ENCODE measurements at regions of chr10 and their contacts with region 1.

Region 1: DNA sequence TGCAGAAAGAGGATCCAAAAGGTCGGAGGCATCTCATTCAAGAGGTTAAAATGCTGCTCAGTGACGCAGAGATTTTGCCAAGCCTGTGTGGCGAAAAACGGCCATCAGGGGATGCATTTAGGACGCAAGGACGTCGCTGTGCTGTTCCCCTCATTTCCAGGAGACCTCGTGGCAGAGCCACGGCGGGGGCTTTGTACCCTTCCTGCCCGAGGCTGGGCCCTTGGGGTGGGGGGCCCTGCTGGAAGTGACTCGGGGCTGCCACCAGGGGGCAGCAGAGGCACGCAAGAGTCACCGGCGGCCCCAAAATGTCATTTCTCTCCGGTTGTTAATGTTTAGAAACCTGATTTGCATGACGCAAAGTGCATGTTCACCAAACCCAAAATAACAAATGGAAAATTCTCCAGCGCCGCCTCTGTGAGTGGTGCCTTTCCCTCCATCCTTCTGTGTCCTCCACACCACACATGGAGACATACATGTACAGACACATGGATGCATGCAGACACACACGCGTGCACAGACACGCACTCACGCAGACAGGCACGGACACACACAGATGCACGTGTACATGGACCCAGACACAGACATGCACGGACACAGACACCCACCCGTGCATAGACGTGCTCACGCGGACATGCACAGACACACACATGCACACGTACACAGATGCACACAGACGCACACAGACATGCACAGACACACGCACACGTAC is 51.0 kb upstream of the NKX6-2 start:
- DNase-seq: no peak
- ATAC-seq: peak; percentile 51 to 61

Region 2: DNA sequence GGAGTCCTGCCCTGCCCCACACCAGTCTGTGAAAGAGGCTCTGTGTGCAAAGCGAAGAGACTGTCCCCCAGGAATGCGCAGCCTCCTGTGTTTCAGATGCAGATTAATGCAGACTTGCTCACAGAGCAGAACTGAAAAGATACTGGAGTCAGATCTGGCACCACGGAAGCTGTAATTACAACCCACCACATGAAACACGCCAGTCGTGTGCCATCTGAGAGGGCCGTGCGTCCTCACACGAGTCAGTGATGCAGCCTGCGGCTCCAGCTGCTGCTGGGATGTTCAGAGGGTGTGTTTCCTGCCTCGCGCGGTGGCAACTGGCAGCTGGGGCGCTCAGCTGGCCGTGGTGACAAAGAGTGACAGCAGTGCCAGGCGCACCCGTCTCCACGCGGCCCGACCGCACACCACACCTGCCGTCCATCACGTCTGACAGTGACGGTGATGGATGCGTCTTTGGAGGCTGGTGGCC is 101.0 kb before region 1 on chr10:
- intact Hi-C with region 1: no loop called
- DNase-seq: no peak
- ATAC-seq: no peak

Region 3: DNA sequence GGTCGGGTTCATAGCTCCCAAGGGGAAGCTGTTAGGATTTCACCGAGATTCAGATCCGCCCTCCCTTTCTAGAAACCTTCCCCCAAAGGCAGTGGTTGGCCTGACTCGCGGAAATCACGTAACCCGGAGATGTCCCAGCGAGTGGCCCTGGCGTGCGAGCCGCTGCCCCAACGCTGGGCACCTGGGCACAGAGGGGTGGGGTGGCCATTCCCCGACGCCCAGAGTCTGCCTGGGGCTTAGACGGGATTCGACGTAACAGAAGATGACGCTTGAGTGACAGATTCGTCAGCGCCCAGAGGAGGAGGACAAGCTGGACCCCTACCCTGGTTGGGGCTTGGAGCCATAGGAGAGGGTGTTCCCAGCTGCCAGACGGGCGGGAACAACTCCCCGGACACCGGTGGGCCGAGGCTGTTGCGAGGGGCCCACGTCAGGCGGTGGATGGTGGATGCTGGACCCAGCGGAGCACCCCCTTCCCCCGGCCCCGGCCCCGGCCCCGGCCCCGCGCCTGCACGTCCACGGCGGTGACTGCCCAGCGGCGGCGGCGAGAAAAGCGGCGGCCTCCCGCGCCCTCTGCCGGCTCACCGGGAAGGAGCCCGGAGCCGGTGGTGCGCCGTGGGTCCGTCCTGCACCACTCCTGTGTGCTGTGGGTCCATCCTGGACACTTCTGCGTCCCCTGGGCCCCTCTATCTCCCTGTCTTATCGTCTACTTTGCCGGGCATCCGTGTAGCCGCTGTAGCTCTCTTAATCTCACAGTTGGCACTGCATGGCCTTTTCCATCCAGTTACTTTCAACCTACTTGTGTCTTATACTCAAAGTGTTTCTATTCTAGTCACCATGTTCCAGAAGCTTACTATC is 287.6 kb after region 1 on chr10:
- intact Hi-C with region 1: loop called (anchors 5 to 10 kb)
- DNase-seq: peak; percentile 31
- ATAC-seq: peak; percentile 74 to 77

Region 4: GRCh38 chr10:133422821-133423771 is 586.1 kb after region 1 on chr10:
- intact Hi-C with region 1: no loop called
- DNase-seq: no peak
- ATAC-seq: peak; percentile 11 to 27